Activated CD4-positive, alpha-beta T cell treated with anti-CD3 and anti-CD28 coated beads, Interleukin-2, amount 10 ng/mL, durations not matched to agents 24 days and 14 days (primary cell): ENCODE measurements at regions of chr19 and their contacts with region 1.

Region 1: GRCh38 chr19:9435279-9436268 is at the start of gene ZNF266:
- DNase-seq: peak; percentile 98
- H3K4me3 Mint-ChIP-seq: peak within 1 kb of the TSS; percentile 96
- H3K27ac Mint-ChIP-seq: peak within 1 kb of the TSS; percentile 99
- H3K4me1 Mint-ChIP-seq: peaks cover 22% of the 10 kb centered on the region
- H3K27me3 Mint-ChIP-seq: no peaks in the 10 kb centered on the region
- total RNA-seq, gene ZNF266: 24.9 and 25.3 TPM in 2 replicates

Region 2: GRCh38 chr19:9171393-9171991 is 264.1 kb before region 1 on chr19:
- intact Hi-C with region 1: no loop called
- DNase-seq: no peak
- H3K4me3 Mint-ChIP-seq: no peak overlapping the region
- H3K27ac Mint-ChIP-seq: no peak overlapping the region
- H3K4me1 Mint-ChIP-seq: no peaks in the 10 kb centered on the region
- H3K27me3 Mint-ChIP-seq: no peaks in the 10 kb centered on the region

Region 3: DNA sequence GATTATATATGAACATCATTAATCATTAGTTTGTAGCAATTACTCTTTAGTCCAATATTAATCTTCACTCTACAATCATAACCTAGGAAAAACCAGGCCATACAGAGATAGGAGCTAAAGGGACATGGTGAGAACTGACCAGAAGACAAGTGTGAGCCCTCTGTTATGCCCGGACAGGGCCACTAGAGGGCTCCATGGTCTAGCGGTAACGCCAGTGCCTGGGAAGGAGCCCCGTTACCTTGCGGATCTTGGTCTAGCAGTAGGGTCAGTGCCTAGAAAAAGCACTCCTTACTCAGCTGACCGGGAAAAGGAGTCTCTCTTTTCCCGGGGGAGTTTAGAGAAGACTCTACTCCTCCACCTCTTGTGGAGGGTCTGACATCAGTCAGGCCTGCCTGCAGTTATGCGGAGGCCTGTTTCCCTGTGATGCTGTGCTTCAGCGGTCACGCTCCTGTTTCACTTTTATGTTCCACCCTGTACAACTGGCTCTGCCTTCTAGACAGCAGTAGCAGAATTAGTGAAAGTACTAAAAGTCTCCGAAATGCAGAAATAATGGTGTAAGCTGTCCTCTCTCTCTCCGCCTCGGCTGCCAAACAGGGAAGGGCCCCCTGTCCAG is 230.0 kb before region 1 on chr19:
- intact Hi-C with region 1: loop called (anchors 10 kb)
- DNase-seq: peak; percentile 90
- H3K4me3 Mint-ChIP-seq: peak overlapping the region; percentile 56
- H3K27ac Mint-ChIP-seq: no peak overlapping the region
- H3K4me1 Mint-ChIP-seq: peaks cover 5% of the 10 kb centered on the region
- H3K27me3 Mint-ChIP-seq: no peaks in the 10 kb centered on the region

Region 4: GRCh38 chr19:9309139-9309973 is 126.2 kb before region 1 on chr19 and contains the start of gene ZNF699:
- intact Hi-C with region 1: loop called (anchors 1 kb)
- DNase-seq: peak; percentile 99
- H3K4me3 Mint-ChIP-seq: peak within 1 kb of the TSS; percentile 96
- H3K27ac Mint-ChIP-seq: peak within 1 kb of the TSS; percentile 94
- H3K4me1 Mint-ChIP-seq: peaks cover 14% of the 10 kb centered on the region
- H3K27me3 Mint-ChIP-seq: no peaks in the 10 kb centered on the region
- total RNA-seq, gene ZNF699: 4.4 and 4.5 TPM in 2 replicates

Region 5: DNA sequence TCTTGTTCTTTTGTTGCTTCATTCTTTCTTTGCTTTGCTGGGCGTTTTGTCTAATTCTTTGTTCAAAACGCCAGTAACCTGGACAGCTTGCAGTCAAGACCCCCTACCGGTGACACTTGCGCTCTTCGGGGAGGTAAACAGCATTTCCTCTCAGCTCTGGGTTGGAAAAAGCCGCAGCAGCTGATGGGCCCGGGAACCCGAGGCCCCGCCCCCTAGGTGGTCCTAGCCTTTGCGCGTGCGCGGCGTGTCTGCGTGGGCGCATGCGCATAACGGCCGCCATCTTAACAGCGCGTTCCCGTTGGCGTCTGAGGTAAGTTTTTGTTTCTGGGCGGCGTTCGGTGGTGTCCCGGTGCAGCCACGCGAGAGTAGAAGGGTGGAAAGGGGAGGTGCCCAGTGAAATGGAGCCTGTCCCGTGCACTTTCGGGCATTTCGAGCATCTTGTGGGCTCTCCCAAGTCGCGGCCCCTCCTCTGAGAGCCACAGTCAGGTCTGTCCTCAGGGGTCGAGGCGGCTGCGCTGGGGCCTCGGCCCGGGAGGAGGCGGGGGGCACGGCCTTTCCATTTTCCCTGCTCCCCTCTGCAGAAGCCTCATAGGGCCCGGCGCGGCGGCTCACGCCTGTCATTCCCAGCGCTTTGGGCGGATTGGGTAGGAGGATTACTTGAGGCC is 111.5 kb before region 1 on chr19 and contains the start of gene ZNF559:
- intact Hi-C with region 1: loop called (anchors 1 kb)
- DNase-seq: peak; percentile 98
- H3K4me3 Mint-ChIP-seq: peak within 1 kb of the TSS; percentile 93
- H3K27ac Mint-ChIP-seq: peak within 1 kb of the TSS; percentile 94
- H3K4me1 Mint-ChIP-seq: peaks cover 9% of the 10 kb centered on the region
- H3K27me3 Mint-ChIP-seq: no peaks in the 10 kb centered on the region
- total RNA-seq, gene ZNF559: 8.2 and 9.5 TPM in 2 replicates

Region 6: DNA sequence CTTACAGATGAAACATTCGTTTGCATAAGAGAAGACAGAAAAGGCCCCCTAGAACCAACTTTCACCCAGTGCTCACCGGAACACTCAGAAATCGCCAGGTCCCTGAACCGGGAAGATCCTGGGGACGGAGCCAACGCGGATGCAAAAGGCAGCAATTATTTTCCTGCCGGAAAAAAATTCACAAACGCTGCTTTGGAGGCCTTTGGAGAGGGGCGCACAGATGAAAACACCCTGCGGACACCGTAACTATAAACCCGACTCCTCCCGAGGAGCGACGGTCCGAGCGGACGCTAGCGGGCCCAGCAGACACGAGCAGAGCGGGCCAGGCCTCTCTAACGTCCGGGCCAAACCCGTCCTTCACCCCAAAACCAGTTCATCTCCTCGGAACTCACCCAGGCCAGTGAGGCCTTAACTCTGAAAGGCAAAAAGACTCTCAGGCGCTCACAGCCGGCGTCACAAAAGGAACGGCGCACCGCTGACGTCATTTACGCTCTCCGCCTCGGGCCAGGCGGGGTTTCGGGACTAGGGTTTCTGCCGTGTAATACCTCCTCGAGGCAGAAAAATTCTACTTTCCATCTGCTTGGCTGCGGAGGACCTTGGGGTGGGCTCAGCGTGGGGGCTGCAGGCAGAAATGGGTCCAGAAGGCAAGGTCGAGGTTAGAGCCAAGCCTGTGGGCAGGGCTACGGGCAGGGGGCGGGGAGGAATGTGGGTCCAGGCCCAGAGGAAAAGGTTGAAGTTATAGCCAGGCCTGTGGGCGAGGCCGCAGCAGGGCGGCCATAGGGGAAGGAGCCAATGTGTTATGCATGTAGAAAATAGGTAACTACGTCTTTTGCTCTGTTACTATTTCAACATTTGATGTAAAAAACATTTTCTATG is 102.8 kb after region 1 on chr19 and contains the start of gene ZNF426:
- intact Hi-C with region 1: loop called (anchors 1 kb)
- DNase-seq: peak; percentile 95
- H3K4me3 Mint-ChIP-seq: peak within 1 kb of the TSS; percentile 97
- H3K27ac Mint-ChIP-seq: peak within 1 kb of the TSS; percentile 92
- H3K4me1 Mint-ChIP-seq: peaks cover 8% of the 10 kb centered on the region
- H3K27me3 Mint-ChIP-seq: no peaks in the 10 kb centered on the region
- total RNA-seq, gene ZNF426: 9.7 and 10.9 TPM in 2 replicates